ENCODE measurements at regions of chr19 and their contacts with region 1.

Region 1: DNA sequence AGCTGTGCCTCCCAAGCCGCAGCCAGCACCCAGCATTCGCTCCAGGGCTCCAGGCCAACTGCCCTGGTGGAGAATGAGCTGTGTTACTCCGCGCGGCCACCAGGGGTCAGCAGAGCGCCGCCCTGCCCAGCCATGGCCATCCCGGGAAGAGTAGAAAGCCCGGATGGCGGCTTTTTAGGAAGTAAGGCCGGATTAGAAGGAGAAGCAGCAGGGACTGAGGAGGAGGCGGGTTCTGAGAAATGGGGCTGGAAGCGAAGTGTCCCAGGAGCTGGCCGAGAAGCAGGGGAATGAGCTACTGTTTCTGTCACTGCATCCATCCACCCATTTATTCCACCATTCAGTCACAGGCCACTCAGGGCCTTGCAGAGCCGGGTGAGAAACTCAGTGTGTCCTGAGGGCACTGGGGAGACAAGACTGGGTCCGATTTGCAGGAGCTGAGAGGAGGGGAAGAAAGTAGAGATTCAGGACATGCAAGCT is 6.6 kb upstream of the NPAS1 start:
- DNase-seq: no peak
- ATAC-seq: peak; percentile 95
- H3K4me3 ChIP-seq: no peak overlapping the region
- H3K27ac ChIP-seq: no peak overlapping the region
- H3K4me1 ChIP-seq: no peaks in the 10 kb centered on the region
- H3K27me3 ChIP-seq: no peaks in the 10 kb centered on the region
- CTCF ChIP-seq: peak; percentile 95 to 99 (median 97)
- EP300 ChIP-seq: no peak
- POLR2A ChIP-seq: no peak
- RAD21 ChIP-seq: peak; percentile 87

Region 2: DNA sequence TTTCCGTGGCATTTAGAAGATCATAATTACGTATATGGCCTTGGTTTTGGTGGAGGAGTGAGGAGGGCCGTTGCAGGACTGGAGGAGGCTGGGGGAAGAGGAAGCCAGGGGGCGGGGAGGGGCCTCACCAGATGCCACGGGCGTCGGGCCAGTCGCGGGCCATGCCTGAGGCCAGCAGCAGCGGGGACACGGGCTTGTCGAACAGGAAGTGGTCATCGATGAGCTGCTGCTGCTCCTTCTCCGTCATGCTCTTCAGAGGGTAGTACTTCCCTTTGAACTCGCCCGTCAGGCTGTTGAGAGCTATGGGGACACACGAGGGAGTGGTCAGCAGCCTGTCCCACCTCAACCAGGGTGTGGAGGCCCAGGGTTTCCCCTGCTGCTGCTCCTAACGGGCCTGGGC is 1701.5 kb before region 1 on chr19:
- CTCF ChIA-PET with region 1: no interaction called
- POLR2A ChIA-PET with region 1: no interaction called
- RAD21 ChIA-PET with region 1: no interaction called
- SMC1A ChIA-PET with region 1: no interaction called
- in situ Hi-C with region 1: no loop called
- intact Hi-C with region 1: no loop called
- DNase-seq: no peak
- ATAC-seq: no peak
- H3K4me3 ChIP-seq: no peak overlapping the region
- H3K27ac ChIP-seq: no peak overlapping the region
- H3K4me1 ChIP-seq: no peaks in the 10 kb centered on the region
- H3K27me3 ChIP-seq: no peaks in the 10 kb centered on the region
- CTCF ChIP-seq: no peak
- EP300 ChIP-seq: no peak
- POLR2A ChIP-seq: no peak
- RAD21 ChIP-seq: no peak

Region 3: DNA sequence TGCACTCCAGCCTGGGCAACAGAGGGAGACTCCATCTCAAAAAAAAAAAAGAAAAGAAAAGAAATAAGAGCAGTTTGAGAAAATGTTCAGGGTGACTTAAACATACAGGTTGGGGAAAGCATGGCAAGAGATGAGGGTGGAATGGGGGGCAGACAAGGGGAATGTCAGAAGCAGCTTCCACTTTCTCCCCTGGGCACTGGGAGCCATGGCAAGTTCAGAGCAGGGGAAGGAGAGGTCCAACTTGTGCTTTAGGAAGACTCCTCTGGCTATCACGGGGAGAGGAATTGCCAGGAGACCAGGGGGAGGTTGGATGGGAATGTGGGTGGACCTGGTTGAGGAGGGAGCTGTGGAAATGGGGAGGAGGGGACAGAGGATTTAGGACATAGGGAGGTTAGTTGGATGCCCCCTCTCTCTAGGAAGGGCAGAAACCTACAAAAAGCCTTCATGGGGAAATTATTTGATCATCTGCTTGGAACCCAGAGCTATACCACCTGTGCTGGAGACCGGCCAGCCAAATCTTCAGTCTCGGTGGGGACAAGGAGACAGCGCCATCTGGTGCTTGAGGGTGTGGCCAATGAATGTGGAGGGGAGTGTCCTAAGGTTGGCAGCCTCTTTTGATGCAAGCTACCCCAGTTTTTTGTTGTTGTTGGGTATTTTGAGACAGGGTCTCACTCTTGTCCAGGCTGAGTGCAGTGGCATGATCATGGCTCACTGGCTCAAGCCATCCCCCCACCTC is 259.5 kb before region 1 on chr19:
- CTCF ChIA-PET with region 1: interaction called, 11 read pairs
- POLR2A ChIA-PET with region 1: no interaction called
- RAD21 ChIA-PET with region 1: interaction called, 3 read pairs
- SMC1A ChIA-PET with region 1: interaction called, 4 read pairs
- in situ Hi-C with region 1: no loop called
- intact Hi-C with region 1: no loop called
- DNase-seq: no peak
- ATAC-seq: peak; percentile 87
- H3K4me3 ChIP-seq: no peak overlapping the region
- H3K27ac ChIP-seq: no peak overlapping the region
- H3K4me1 ChIP-seq: no peaks in the 10 kb centered on the region
- H3K27me3 ChIP-seq: no peaks in the 10 kb centered on the region
- CTCF ChIP-seq: peak; percentile 73 to 76 (median 75)
- EP300 ChIP-seq: no peak
- POLR2A ChIP-seq: no peak
- RAD21 ChIP-seq: peak; percentile 58

Region 4: DNA sequence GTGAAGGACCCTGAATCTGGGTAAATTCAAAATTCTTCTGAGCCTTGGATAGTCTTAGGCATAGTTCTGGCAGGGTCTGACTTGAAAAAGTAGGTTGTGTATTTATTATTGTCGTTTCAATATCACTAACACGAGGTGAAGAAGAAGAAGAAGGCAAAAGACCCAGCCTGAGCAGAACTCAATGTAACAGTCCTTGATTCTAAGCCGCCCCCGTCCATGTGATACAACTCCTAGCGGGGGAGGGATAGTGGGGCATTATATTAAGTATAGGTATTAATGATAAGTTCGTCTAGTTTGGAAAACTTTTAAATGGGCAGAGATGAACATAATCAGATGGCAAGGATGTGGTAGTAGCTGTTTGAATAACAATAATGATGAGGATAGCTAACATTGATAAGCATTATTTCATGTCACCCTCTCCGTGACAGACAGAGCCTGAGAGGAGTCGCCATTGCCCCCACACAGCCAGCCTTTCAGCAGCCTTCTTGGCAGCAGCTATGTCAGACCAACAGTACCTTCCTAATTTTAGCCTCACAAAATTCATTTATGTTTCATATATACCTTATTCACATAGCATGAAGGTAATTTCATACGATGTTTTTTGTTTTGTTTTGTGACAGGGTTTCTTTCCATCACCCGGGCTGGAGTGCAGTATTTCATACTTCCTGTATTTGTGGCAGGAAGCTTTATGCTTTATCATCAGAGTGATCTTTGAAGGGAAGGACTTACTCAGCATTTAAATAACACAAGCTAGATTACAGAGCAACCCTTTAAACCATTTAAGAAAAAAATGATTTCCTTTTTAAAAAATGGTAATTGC is 57.9 kb before region 1 on chr19:
- CTCF ChIA-PET with region 1: interaction called, 13 read pairs
- POLR2A ChIA-PET with region 1: no interaction called
- RAD21 ChIA-PET with region 1: interaction called, 3 read pairs
- SMC1A ChIA-PET with region 1: no interaction called
- in situ Hi-C with region 1: no loop called
- intact Hi-C with region 1: no loop called
- DNase-seq: no peak
- ATAC-seq: peak; percentile 73
- H3K4me3 ChIP-seq: peak overlapping the region; percentile 23; the same call in 1 of the 2 replicates
- H3K27ac ChIP-seq: peak overlapping the region; percentile 62
- H3K4me1 ChIP-seq: peaks cover 46% of the 10 kb centered on the region
- H3K27me3 ChIP-seq: no peaks in the 10 kb centered on the region
- CTCF ChIP-seq: no peak
- EP300 ChIP-seq: no peak
- POLR2A ChIP-seq: no peak
- RAD21 ChIP-seq: no peak

Region 5: DNA sequence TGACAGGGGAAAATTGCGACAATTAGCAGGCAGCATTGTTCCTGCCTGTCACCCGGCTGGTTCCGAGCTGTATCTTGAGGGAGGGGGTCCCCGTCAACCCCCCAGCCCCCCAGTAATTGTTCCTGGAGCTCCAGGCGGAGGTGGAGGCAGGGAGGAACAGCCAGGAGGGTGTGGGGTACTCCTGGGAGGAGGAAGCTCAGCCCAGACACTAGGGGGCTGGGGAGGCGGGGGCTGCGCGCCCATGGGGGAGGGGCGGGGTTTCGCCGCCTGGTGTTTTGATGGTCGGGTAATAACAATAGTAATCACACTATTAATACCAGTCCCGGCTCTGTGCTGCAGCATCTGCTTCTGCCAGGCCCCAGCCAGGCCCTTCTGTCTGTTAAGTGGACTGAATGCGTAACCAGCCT is 15.1 kb after region 1 on chr19:
- CTCF ChIA-PET with region 1: interaction called, 67 read pairs
- POLR2A ChIA-PET with region 1: no interaction called
- RAD21 ChIA-PET with region 1: interaction called, 12 read pairs
- SMC1A ChIA-PET with region 1: interaction called, 18 read pairs
- in situ Hi-C with region 1: no loop called
- intact Hi-C with region 1: loop called (anchors 1 kb)
- DNase-seq: no peak
- ATAC-seq: no peak
- H3K4me3 ChIP-seq: no peak overlapping the region
- H3K27ac ChIP-seq: no peak overlapping the region
- H3K4me1 ChIP-seq: no peaks in the 10 kb centered on the region
- H3K27me3 ChIP-seq: peaks cover 6 to 12% of the 10 kb centered on the region in 2 experiments; a peak in 3 of 4 replicates
- CTCF ChIP-seq: no peak
- EP300 ChIP-seq: no peak
- POLR2A ChIP-seq: no peak
- RAD21 ChIP-seq: no peak

Region 6: DNA sequence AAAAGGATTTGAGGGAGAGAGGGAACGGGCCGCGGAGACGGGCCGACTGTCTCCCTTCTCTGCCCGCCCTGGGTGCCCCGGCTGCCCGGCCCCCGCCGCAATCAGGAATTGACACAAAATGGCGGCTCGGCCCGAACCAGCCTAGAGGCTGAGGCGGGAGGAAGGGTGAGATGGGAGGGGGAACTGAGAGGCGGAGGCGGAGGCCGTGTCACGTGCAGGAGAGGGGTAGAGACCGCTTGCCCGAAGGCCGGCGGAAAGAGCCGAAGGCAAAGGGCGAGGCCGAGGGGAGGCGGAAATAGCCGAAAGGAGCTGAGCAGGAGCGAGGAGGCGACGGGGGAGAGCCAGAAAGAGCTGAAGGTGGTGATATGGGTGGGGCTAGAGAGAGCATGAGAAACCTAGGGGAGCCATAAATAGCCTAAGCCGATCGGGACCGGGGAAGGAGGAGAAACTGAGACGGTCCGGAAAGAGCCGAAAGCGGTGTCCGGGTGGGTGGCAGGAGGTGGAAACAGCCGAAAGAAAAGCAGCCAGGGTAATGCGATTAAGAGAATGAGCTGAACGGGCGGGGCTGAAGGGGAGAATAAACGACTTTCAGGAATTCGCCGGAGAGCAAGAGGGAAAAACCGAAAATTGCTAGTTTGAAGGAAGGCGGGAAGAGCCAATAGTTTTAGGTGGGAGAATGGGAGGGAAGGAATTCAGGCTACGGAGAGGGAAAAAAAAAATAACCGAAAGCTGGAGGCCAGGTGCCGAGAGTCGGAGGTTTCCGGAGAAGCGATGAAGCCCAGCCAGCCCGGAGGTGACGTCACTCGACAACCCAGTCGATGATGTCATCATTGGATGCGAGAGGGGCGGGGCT is 100.1 kb after region 1 on chr19 and contains the start of gene ZC3H4:
- CTCF ChIA-PET with region 1: interaction called, 10 read pairs
- POLR2A ChIA-PET with region 1: no interaction called
- RAD21 ChIA-PET with region 1: no interaction called
- SMC1A ChIA-PET with region 1: interaction called, 3 read pairs
- in situ Hi-C with region 1: no loop called
- intact Hi-C with region 1: no loop called
- DNase-seq: peak; percentile 100
- ATAC-seq: peak; percentile 87
- H3K4me3 ChIP-seq: peak within 1 kb of the TSS; percentile 98
- H3K27ac ChIP-seq: peak within 1 kb of the TSS; percentile 99
- H3K4me1 ChIP-seq: peaks cover 7% of the 10 kb centered on the region
- H3K27me3 ChIP-seq: no peaks in the 10 kb centered on the region
- CTCF ChIP-seq: no peak
- EP300 ChIP-seq: 0 out of 4 replicates have a peak, but pooled peaks of 1 of the 2 experiments have one; percentile 26
- POLR2A ChIP-seq: peak; percentile 90
- RAD21 ChIP-seq: no peak
- polyA plus RNA-seq, gene ZC3H4: 5.8 to 9.3 TPM

Region 7: GRCh38 chr19:47130591-47131227 is 117.6 kb after region 1 on chr19 and contains the start of gene SAE1:
- CTCF ChIA-PET with region 1: interaction called, 45 read pairs
- POLR2A ChIA-PET with region 1: no interaction called
- RAD21 ChIA-PET with region 1: interaction called, 25 read pairs
- SMC1A ChIA-PET with region 1: interaction called, 13 read pairs
- in situ Hi-C with region 1: no loop called
- intact Hi-C with region 1: loop called (anchors 2 kb)
- DNase-seq: peak; percentile 95
- ATAC-seq: peak; percentile 92
- H3K4me3 ChIP-seq: peak within 1 kb of the TSS; percentile 94
- H3K27ac ChIP-seq: peak within 1 kb of the TSS; percentile 90
- H3K4me1 ChIP-seq: peaks cover 3% of the 10 kb centered on the region; the same call in 1 of the 2 replicates
- H3K27me3 ChIP-seq: no peaks in the 10 kb centered on the region
- CTCF ChIP-seq: peak; percentile 53 to 81 (median 56); a peak in 5 of 6 replicates
- EP300 ChIP-seq: no peak
- POLR2A ChIP-seq: peak; percentile 94
- RAD21 ChIP-seq: no peak; the same call in 1 of the 2 replicates
- polyA plus RNA-seq, gene SAE1: 62.0 to 90.0 TPM

Measured in GM12878 (cell line).